PC-9 (cell line): ENCODE measurements at regions of chr21 and their contacts with region 1.

Region 1: DNA sequence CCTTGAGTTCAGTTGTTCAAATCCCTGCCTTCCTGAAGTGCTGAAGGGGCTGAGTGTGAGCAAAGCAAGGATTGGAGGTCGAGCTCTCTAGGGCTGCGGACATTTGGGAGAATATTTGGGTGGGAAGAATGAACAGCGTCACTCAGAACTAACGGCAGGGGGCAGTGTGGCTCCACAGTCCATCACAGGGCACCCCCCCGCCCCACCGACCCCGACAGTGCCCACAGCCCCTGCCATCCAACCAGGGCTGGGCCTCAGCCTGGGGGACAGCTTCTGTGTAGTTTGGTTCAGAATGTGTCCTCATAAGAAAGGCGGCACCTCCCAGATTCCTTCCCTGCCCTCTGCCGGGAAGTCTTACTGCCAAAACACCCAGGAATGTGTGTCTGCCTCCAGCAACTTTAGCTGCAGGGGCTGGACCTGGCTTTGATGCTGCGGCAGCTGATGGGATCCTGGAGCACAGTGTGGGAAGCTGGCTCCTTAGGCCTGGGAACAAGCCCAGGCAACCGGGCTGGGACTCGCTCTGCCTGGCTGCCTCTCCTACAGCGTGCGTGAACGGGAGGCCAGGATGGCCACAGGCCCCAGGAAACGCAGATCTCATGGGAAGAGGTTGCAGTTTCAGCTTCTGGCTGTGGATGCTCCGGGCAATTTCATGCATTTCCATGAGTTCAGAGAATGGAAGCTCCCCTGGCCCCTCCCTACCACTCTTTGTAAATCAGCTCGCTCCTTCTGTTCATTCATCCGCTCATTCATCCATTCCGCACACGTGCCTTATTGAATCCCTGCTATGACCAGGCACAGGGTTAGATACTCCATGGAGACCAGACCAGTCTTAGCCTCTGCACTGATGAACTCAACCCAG is 104.9 kb upstream of the TMPRSS2 start:
- DNase-seq: peak; percentile 87 to 97
- H3K4me3 ChIP-seq: peak overlapping the region; percentile 18; the same call in 1 of the 2 replicates
- H3K27ac ChIP-seq: peak overlapping the region; percentile 86
- H3K4me1 ChIP-seq: peaks cover 54% of the 10 kb centered on the region
- H3K27me3 ChIP-seq: no peaks in the 10 kb centered on the region
- CTCF ChIP-seq: peak; percentile 83

Region 2: DNA sequence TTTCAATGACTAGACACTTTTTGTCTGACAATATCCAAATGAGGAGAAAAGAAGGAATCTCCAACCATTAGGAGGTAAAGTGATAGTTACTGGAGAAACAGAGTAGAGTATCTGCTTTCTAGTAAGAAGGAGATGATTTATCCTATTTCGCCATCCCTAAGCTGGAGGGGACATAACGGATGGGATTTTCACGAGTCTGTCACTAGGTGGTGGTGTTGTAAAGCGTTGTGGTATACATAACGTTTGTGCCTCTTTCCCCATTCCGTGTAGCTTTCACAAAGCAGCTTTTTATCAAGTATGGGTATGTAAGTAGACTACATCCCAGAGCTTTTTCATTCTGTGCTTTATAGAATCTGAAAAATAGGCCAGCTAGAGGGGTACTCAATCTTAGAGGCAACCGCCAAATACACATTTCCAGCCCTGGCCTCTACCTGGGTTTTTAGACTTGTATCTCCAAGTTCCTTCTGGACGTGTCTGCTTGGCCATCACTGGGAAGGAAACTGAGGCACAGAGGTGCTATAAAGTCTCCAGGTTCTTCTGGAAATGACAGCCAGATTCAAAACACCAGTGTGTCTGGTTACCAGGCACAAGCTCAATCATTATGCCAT is 329.6 kb before region 1 on chr21:
- CTCF ChIA-PET with region 1: interaction called, 3 read pairs
- POLR2A ChIA-PET with region 1: interaction called, 6 read pairs
- intact Hi-C with region 1: loop called (anchors 2 kb)
- DNase-seq: peak; percentile 43 to 69
- H3K4me3 ChIP-seq: no peak overlapping the region
- H3K27ac ChIP-seq: no peak overlapping the region
- H3K4me1 ChIP-seq: no peaks in the 10 kb centered on the region
- H3K27me3 ChIP-seq: no peaks in the 10 kb centered on the region
- CTCF ChIP-seq: peak; percentile 76

Region 3: DNA sequence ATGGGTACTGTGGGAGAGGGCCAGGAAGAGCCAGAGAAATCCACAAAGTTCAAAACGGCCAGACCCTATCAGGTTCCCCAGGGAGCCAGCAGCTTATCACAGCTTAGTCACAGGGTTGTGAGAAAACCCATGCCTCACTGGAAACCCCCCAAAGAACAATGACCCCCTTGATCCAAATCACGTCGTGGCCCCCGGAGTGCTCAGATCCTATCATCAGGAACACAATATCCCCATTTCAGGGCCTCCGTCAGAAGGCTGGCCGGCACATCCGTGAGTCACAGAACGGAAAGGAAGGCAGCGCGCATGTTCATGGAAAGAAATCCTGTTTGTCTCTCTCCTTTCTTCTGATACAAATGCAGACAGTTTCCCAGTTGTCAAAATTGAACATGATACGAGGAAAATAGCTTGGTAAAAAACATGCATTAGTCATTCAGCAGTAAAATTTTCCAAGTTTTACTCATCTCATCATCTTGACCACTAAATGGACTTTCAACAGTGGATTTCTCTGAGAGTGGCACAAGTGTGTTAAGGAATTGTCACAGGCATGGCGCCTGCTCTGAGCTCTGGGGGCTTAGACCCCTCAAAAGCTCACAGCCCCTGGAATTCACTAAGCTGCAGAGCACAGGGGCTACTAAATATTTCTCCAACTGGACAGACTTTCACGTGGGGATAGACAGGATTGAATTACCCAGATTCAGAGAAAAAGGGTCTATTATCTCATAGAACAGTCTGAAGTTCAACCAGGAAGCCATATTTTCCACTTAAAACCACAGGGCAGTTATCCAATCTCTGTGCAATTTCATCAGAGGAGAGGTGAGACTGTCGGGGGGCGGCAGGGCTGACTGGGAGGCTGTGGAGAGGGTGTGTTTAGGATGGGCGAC is 29.2 kb after region 1 on chr21:
- CTCF ChIA-PET with region 1: interaction called, 12 read pairs
- POLR2A ChIA-PET with region 1: interaction called, 3 read pairs
- intact Hi-C with region 1: no loop called
- DNase-seq: peak; percentile 58 to 93
- H3K4me3 ChIP-seq: peak overlapping the region; percentile 44; the same call in 1 of the 2 replicates
- H3K27ac ChIP-seq: peak overlapping the region; percentile 100
- H3K4me1 ChIP-seq: peaks cover 75% of the 10 kb centered on the region
- H3K27me3 ChIP-seq: no peaks in the 10 kb centered on the region
- CTCF ChIP-seq: no peak

Region 4: DNA sequence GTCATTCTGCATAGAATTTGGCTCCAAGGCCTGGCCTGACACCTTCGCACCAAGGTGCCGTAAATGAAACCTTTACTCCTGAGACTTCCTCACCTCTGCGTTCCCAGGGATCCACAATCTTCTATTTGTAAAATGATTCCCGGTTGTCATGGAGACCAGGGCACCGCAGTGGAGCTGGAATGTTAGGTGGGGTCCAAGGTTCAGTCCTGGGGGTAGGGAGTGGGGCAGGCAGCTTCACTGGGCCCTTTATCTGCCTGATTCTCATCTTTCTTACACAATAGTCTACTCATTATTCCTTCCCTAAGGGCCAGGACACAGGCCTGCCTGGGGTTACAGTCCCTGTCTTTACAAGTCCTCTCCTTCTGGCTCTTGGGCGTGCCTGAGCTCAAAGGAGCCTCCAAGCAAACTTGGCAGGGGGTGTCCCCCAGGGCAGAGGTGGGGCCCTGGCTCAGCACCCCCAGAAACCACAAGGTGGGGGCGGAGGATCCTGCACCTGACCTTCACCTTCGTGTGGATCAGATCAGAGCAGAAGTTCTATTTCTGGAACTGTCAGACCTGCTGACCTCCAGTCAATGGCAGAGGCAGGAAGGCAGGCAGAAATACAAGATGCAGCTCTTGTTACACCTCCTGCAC is 102.9 kb after region 1 on chr21:
- CTCF ChIA-PET with region 1: interaction called, 4 read pairs
- POLR2A ChIA-PET with region 1: no interaction called
- intact Hi-C with region 1: loop called (anchors 1 kb)
- DNase-seq: peak; percentile 95 to 98
- H3K4me3 ChIP-seq: no peak overlapping the region
- H3K27ac ChIP-seq: peak overlapping the region; percentile 93
- H3K4me1 ChIP-seq: peaks cover 49% of the 10 kb centered on the region
- H3K27me3 ChIP-seq: no peaks in the 10 kb centered on the region
- CTCF ChIP-seq: no peak

Region 5: DNA sequence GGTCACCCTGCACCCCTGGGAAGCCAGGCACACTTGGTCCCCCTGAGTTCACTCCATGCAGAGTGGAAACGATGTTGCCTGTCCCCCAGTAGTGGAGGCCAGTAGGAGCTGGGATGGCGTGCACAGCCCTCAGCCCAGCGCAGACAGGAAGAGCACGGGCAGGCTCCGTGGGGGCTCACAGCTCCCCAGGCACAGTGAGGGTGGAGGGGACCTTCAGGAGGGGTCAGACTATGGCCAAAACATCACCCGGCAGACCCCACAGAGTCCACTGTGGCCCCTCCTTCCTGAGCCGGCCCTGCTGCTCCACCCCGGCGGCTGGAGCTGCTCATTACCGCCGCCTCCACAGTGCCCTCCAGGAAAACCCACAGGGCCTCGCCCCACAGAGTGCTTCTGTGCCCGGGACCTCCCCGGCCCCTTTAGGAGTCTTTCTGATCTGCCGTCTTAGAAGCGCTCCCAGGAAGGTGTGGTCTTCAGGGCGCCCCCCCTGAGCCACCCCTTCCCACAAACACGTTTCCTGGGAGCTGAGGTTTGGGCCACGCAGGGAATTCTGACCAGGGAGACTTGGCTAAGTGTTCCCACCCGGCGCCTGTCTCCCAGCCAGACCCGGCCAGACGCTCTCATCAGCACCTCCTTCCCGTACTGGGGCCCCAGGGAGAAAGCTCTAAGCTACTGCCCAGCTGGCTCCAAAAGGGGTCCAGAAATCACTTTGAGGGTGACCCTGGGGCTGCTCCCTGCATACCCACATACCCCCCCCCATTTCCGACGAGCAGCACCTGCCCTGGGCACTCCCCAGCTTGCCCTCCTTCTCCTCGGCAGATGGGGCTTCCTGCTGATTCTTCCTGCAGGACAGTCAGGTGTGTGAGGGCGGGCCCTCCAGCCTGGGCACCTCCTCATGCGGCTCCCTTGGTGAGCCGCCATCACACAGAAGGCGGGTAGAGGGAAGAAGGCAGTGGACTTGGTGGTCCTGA is 115.2 kb after region 1 on chr21:
- CTCF ChIA-PET with region 1: no interaction called
- POLR2A ChIA-PET with region 1: no interaction called
- intact Hi-C with region 1: no loop called
- DNase-seq: no peak
- H3K4me3 ChIP-seq: no peak overlapping the region
- H3K27ac ChIP-seq: peak overlapping the region; percentile 93
- H3K4me1 ChIP-seq: peaks cover 53% of the 10 kb centered on the region
- H3K27me3 ChIP-seq: no peaks in the 10 kb centered on the region
- CTCF ChIP-seq: no peak

Region 6: DNA sequence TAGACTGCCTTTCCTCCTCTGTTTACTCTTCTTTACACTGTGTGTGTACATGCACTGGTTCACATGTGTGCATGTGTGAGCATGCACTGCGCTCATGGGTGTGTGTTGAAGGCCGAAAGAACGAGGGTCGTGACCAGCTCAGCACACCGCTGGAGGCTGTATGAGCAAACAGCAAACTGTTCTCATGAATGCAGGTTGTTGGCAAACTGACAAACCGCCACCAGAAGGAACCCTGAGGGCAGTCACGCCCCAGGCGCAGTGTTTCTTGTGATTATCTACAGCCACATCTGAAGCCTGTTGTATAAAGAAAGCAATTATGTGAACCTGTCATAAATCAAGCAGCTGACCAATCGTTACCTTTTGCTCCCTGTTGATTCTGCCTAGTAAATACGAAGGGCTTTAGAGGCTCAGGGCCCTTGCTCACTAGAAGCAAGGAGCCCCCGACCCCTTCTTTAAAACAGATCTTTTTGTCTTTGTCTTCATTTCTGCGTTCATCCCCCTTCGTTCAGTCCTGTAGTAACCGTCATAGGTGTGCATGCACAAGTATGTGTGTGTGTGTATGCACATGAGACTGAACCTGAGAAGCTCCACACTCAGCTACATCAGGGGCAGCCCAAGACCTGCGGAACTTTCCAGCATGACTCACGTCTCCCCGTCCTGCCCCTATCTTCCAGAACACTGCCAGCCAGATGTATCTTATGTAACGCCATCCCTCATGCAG is 170.7 kb after region 1 on chr21:
- CTCF ChIA-PET with region 1: interaction called, 14 read pairs
- POLR2A ChIA-PET with region 1: no interaction called
- intact Hi-C with region 1: loop called (anchors 1 kb)
- DNase-seq: peak; percentile 95
- H3K4me3 ChIP-seq: peak overlapping the region; percentile 13; the same call in 1 of the 2 replicates
- H3K27ac ChIP-seq: peak overlapping the region; percentile 99
- H3K4me1 ChIP-seq: peaks cover 57% of the 10 kb centered on the region
- H3K27me3 ChIP-seq: no peaks in the 10 kb centered on the region
- CTCF ChIP-seq: no peak

Region 7: DNA sequence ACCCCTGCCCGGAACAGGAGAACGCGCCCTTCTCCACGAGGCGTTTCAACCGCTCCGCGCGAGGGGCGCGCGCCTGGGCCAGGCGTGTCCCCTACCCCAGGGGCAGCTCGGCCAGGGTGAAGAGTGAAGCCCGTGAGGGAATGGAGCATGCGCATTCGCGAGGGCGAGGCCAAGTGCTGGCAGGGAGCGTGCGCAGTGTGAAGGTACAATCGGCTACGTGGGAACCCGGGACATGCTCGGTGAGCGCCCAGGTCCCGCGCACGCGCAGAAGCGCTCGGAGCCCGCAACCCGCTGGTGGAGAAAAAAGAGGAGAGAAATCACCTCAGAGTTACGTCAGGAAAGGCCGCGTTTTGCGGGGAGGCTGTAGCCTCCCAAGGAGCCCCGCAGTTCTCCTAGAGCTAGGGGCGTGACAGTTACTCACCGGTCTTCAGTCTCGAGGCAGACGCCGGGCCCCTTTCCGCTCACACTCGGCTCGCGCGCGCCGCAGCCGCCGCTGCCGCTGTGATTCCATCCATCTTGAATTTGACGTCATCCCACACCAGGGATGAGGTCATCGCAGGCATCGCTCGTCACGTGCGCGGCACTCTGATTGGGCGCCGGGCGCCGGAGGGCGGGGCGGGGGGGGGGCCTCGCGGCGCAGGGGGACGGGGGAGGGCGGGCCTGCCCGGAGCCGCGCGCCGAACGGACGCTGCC is 397.1 kb after region 1 on chr21 and contains the start of gene ZBTB21:
- CTCF ChIA-PET with region 1: no interaction called
- POLR2A ChIA-PET with region 1: no interaction called
- intact Hi-C with region 1: loop called (anchors 1 kb)
- DNase-seq: peak; percentile 88 to 96
- H3K4me3 ChIP-seq: peak within 1 kb of the TSS; percentile 85
- H3K27ac ChIP-seq: peak within 1 kb of the TSS; percentile 90
- H3K4me1 ChIP-seq: peaks cover 15% of the 10 kb centered on the region
- H3K27me3 ChIP-seq: no peaks in the 10 kb centered on the region
- CTCF ChIP-seq: no peak
- total RNA-seq, gene ZBTB21: 9.1 and 13.5 TPM in 2 replicates